ENCODE measurements at regions of chr16 and their contacts with region 1.

Region 1: DNA sequence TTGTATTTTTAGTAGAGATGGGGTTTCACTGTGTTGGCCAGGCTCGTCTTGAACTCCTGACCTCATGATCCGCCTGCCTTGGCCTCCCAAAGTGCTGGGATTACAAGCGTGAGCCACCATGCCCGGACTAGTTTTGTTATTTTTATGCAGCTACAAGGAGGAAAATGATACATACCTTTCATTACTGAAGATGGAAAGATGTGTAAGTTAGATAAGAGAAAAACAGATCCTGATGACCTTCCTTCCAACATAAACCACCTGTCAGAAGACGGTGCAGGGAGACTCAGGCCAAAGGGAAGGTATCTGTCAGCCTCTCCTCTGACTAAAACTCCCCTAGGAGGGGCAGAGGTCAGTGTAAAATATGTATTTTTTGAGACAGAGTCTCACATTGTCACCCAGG is 23.0 kb downstream of the FCSK start:
- DNase-seq: no peak
- H3K4me3 Mint-ChIP-seq: no peak overlapping the region
- H3K27ac Mint-ChIP-seq: peak overlapping the region; percentile 89
- H3K4me1 Mint-ChIP-seq: peaks cover 26% of the 10 kb centered on the region
- H3K27me3 Mint-ChIP-seq: no peaks in the 10 kb centered on the region

Region 2: DNA sequence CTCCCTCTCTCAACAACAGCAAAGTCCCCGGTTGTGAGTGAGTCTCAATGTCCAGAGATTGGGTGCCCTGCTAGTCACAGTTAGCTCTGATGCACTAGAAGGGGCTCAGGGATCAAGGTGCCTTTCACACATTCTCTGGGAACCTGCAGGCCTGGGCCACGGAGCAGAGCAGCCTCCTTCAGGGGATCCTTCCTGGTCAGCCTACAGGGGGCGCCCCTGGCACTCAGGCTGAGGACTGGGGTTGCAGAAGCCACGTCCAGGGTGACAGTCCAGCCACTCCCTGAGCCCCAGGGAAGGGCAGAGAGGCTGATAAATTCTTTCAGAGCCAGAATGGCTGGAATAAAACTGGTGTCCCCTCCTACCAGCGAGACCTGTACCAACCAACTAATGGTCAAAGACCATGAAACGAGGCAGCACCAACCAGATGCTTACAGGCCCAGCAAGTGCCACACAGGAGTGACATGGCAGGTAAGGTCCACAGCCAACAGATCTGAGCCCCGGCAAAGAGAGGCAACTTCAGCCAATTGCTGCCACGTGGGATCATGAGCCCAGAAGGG is 81.9 kb before region 1 on chr16:
- intact Hi-C with region 1: loop called (anchors 2 kb)
- DNase-seq: peak; percentile 48
- H3K4me3 Mint-ChIP-seq: no peak overlapping the region
- H3K27ac Mint-ChIP-seq: no peak overlapping the region
- H3K4me1 Mint-ChIP-seq: no peaks in the 10 kb centered on the region
- H3K27me3 Mint-ChIP-seq: no peaks in the 10 kb centered on the region

Region 3: DNA sequence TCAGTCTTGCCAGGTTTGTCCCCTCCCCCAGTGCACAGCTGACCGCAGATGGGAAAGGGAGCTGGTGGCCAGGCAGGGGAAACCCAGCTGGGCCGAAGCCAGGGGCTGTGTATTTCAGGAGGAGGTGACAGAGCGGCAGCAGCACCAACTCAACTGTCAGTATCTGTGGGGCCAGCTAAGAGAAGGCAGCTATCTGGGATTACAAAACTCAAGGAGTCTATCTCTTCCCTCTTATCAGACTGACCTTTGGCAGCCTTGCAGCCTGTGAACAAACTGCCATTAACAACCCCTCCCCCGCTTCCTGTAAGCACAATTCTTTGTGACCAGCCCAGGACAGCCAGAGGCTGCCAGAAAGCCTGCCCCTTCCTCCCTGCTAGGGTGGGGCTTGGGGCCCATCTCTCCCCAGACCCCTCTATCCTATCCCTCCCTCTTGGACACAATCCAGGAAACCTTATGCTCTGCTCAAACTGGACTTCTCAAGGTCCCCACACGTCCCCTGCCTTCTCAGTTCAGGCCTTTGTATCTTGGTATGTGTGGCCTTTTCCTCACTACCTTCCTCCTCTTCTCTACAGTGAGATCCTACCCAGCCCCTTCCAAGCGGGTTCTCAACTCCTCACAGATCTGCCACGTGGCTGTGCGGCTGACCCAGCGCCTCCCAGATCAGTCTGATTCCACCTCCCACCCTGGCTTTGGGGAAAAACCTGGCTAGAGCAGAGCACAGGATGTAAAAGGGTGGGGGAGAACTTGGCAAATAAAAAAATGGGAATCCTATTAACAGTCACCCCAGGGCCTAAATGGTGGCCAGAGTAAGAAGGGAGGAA is 49.0 kb before region 1 on chr16:
- intact Hi-C with region 1: loop called (anchors 2 kb)
- DNase-seq: peak; percentile 57
- H3K4me3 Mint-ChIP-seq: peak overlapping the region; percentile 46
- H3K27ac Mint-ChIP-seq: peak overlapping the region; percentile 86
- H3K4me1 Mint-ChIP-seq: peaks cover 51% of the 10 kb centered on the region
- H3K27me3 Mint-ChIP-seq: no peaks in the 10 kb centered on the region

Region 4: GRCh38 chr16:70460737-70461261 is 16.6 kb before region 1 on chr16:
- intact Hi-C with region 1: no loop called
- DNase-seq: no peak
- H3K4me3 Mint-ChIP-seq: no peak overlapping the region
- H3K27ac Mint-ChIP-seq: no peak overlapping the region
- H3K4me1 Mint-ChIP-seq: no peaks in the 10 kb centered on the region
- H3K27me3 Mint-ChIP-seq: no peaks in the 10 kb centered on the region

Region 5: DNA sequence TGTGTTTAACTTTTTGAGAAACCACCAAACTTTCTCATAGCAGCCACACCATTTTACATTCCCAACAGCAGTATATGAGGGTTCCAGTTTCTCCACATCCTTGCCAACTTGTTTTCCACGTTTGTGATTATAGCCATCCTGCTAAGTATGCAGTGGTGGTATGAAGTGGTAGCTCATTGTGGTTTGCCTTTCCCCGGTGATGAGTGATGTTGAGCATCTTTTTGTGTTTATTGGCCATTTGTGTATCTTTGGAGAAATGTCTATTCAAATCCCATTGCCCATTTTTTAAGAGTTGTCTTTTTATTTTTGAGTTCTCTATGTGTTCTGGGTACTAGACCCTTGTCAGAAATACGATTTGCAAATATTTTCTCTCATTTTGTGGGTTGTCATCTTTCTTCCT is 63.6 kb after region 1 on chr16:
- intact Hi-C with region 1: no loop called
- DNase-seq: no peak
- H3K4me3 Mint-ChIP-seq: no peak overlapping the region
- H3K27ac Mint-ChIP-seq: no peak overlapping the region
- H3K4me1 Mint-ChIP-seq: peaks cover 23% of the 10 kb centered on the region
- H3K27me3 Mint-ChIP-seq: no peaks in the 10 kb centered on the region

Region 6: GRCh38 chr16:70646260-70647241 is 169.2 kb after region 1 on chr16 and contains the start of gene IL34:
- intact Hi-C with region 1: no loop called
- DNase-seq: no peak
- H3K4me3 Mint-ChIP-seq: no peak within 1 kb of the TSS
- H3K27ac Mint-ChIP-seq: no peak within 1 kb of the TSS
- H3K4me1 Mint-ChIP-seq: no peaks in the 10 kb centered on the region
- H3K27me3 Mint-ChIP-seq: peaks cover 9% of the 10 kb centered on the region
- total RNA-seq, gene IL34: not detected in 2 replicates